ENCODE measurements at regions of chr14 and their contacts with region 1.

Region 1: DNA sequence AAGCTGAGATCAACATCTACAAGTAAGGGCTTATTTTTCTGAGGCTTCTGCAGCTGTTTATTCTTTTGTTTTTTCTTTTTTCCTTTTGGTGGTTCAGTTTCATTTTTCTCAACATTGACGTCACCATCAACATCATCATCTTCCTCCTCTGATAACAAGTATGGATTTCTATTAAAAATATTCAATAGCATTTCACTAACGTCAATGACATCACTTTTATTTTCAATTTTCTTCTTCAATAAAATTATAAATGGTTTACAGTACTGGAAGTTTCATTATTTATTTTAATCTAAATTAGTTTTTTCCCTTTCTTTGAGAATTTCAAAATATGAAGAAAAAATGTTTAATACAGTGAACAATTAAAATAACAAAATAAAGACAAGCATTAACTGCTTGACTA is 23.9 kb downstream of the NEMF start:
- DNase-seq: no peak
- ATAC-seq: no peak
- H3K4me3 ChIP-seq: no peak overlapping the region
- H3K27ac ChIP-seq: no peak overlapping the region
- H3K4me1 ChIP-seq: no peaks in the 10 kb centered on the region
- H3K27me3 ChIP-seq: no peaks in the 10 kb centered on the region
- CTCF ChIP-seq: no peak

Region 2: GRCh38 chr14:49778421-49778820 is 50.2 kb before region 1 on chr14:
- intact Hi-C with region 1: loop called in 1 of 3 experiments (anchors 5 kb)
- DNase-seq: no peak
- ATAC-seq: no peak
- H3K4me3 ChIP-seq: no peak overlapping the region
- H3K27ac ChIP-seq: no peak overlapping the region
- H3K4me1 ChIP-seq: peaks cover 0 to 6% (median 0%) of the 10 kb centered on the region in 3 donors
- H3K27me3 ChIP-seq: no peaks in the 10 kb centered on the region
- CTCF ChIP-seq: no peak